ENCODE measurements at regions of chr6 and their contacts with region 1.

Region 1: GRCh38 chr6:72616406-72617015 is 5.4 kb upstream of the KCNQ5 start:
- DNase-seq: no peak
- ATAC-seq: no peak
- H3K4me3 ChIP-seq: no peak overlapping the region
- H3K27ac ChIP-seq: no peak overlapping the region
- H3K4me1 ChIP-seq: peaks cover 13% of the 10 kb centered on the region
- H3K27me3 ChIP-seq: no peaks in the 10 kb centered on the region
- CTCF ChIP-seq: peak; percentile 57 to 70 (median 60); a peak in 5 of 6 replicates
- EP300 ChIP-seq: no peak
- POLR2A ChIP-seq: no peak
- RAD21 ChIP-seq: peak; percentile 81

Region 2: DNA sequence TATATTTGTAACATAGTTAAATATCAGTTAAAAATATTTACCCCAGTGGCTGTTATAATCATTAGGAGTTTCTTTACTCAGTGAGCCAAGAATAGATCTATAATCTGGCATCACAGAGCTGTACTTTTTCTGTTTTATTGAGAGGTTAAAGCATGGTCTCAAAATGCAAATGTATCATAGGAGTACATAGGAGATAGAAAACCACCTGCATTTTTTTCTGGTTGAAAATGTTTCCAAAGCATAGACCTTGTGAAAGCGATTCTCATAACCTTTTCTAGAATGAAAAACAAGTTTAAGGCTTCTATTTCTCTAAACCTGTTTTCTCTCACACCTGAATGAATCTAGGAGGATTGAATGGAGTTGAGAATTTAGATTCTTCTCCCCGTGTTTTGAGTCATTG is 19.7 kb after region 1 on chr6:
- CTCF ChIA-PET with region 1: interaction called, 53 read pairs
- POLR2A ChIA-PET with region 1: interaction called, 5 read pairs
- RAD21 ChIA-PET with region 1: interaction called, 172 read pairs
- SMC1A ChIA-PET with region 1: interaction called, 108 read pairs
- in situ Hi-C with region 1: no loop called
- intact Hi-C with region 1: no loop called
- DNase-seq: peak; percentile 60
- ATAC-seq: peak; percentile 83
- H3K4me3 ChIP-seq: peak overlapping the region; percentile 1; the same call in 1 of the 2 replicates
- H3K27ac ChIP-seq: peak overlapping the region; percentile 21
- H3K4me1 ChIP-seq: peaks cover 14% of the 10 kb centered on the region
- H3K27me3 ChIP-seq: no peaks in the 10 kb centered on the region
- CTCF ChIP-seq: no peak
- EP300 ChIP-seq: peak in 1 of 2 experiments; percentile 43; a peak in 1 of 4 replicates
- POLR2A ChIP-seq: no peak
- RAD21 ChIP-seq: no peak

Region 3: DNA sequence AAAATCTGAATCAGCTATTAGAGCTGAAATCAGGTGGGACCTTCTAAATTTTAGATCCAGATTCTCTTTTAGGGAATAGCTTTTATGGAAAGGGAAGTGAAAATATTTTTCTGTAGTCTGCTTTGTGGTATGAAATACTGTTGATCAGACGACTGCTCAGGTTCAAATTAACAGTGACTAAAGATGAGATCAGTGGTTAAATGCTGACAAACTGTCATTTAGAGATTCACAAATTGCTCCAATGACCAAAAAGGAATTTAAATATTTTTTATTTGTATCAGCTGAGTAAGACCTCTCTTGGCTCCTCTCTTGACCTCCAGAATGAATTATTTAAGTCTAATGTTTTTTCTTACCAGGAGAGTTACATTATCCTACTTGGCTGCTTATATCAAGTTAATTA is 82.6 kb after region 1 on chr6:
- CTCF ChIA-PET with region 1: interaction called, 40 read pairs
- POLR2A ChIA-PET with region 1: no interaction called
- RAD21 ChIA-PET with region 1: interaction called, 21 read pairs
- SMC1A ChIA-PET with region 1: interaction called, 245 read pairs
- in situ Hi-C with region 1: no loop called
- intact Hi-C with region 1: no loop called
- DNase-seq: no peak
- ATAC-seq: peak; percentile 75
- H3K4me3 ChIP-seq: no peak overlapping the region
- H3K27ac ChIP-seq: no peak overlapping the region
- H3K4me1 ChIP-seq: no peaks in the 10 kb centered on the region
- H3K27me3 ChIP-seq: no peaks in the 10 kb centered on the region
- CTCF ChIP-seq: no peak
- EP300 ChIP-seq: no peak
- POLR2A ChIP-seq: no peak
- RAD21 ChIP-seq: no peak

Region 4: DNA sequence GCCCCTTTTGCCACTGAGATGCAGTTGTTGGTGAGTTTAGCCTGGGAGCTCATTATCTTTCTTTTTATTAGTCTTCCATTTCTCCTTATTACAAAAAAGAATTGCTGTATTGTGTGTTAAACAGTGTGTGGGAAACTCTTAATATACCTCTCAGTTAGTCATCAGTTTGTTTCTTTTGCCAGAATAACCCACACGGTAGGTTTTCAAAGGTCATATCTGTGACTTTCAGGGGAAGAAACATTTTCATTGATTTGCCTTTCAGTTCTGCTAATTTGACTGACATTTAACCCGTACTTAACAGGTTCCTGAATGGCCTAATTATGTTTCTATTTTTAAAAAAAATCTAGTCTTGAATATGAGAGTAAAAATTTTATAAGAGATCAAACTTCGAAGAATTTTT is 463.5 kb after region 1 on chr6:
- CTCF ChIA-PET with region 1: interaction called, 14 read pairs
- POLR2A ChIA-PET with region 1: no interaction called
- RAD21 ChIA-PET with region 1: interaction called, 13 read pairs
- SMC1A ChIA-PET with region 1: interaction called, 14 read pairs
- in situ Hi-C with region 1: no loop called
- intact Hi-C with region 1: no loop called
- DNase-seq: peak; percentile 33
- ATAC-seq: peak; percentile 89
- H3K4me3 ChIP-seq: no peak overlapping the region
- H3K27ac ChIP-seq: peak overlapping the region; percentile 55; the same call in 1 of the 2 replicates
- H3K4me1 ChIP-seq: peaks cover 3% of the 10 kb centered on the region; the same call in 1 of the 2 replicates
- H3K27me3 ChIP-seq: no peaks in the 10 kb centered on the region
- CTCF ChIP-seq: no peak
- EP300 ChIP-seq: peak; percentile 73 to 76; a peak in 2 of 4 replicates
- POLR2A ChIP-seq: no peak
- RAD21 ChIP-seq: no peak

Region 5: DNA sequence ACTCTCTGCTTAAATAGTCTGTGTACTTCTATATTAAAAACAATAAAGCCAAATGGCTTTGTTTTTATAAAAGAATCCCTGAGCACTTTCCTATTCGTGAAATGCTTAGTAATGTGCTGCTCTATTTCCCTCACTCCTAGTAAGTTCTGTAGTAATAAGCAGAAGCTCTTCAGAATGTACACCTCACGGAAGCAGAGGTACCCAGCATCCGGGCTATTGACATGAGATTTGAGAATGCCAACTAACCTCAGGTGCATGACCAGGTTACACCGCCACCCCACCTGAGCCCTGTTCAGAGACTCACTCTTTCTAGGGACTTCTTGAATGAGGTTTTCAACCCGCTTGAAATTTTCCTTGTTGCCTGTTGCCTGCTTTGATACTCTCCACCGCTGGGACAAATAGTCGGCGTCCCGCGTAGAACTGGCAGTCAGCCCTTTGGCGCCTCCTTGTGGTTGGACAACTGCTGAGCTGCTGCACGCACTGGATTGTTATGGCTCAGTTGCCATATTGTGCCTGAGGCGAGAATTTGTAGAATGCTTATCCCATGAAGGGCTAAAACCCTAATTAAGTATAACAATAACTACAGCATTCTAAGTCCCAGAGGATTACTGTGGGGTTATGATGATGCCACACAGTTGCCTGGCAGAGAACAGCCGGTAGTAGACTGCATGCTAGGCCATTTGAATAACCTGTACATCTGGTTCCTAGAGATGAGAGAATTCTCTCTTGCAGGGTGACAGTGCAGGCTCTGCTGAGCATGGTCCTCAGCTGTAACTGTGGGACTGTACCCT is 513.3 kb after region 1 on chr6:
- CTCF ChIA-PET with region 1: interaction called, 644 read pairs
- POLR2A ChIA-PET with region 1: interaction called, 10 read pairs
- RAD21 ChIA-PET with region 1: interaction called, 436 read pairs
- SMC1A ChIA-PET with region 1: interaction called, 446 read pairs
- in situ Hi-C with region 1: loop called (anchors 5 kb)
- intact Hi-C with region 1: loop called (anchors 1 kb)
- DNase-seq: peak; percentile 39
- ATAC-seq: peak; percentile 99
- H3K4me3 ChIP-seq: no peak overlapping the region
- H3K27ac ChIP-seq: no peak overlapping the region
- H3K4me1 ChIP-seq: no peaks in the 10 kb centered on the region
- H3K27me3 ChIP-seq: no peaks in the 10 kb centered on the region
- CTCF ChIP-seq: peak; percentile 95 to 99 (median 96)
- EP300 ChIP-seq: no peak
- POLR2A ChIP-seq: no peak
- RAD21 ChIP-seq: peak; percentile 99

Region 6: DNA sequence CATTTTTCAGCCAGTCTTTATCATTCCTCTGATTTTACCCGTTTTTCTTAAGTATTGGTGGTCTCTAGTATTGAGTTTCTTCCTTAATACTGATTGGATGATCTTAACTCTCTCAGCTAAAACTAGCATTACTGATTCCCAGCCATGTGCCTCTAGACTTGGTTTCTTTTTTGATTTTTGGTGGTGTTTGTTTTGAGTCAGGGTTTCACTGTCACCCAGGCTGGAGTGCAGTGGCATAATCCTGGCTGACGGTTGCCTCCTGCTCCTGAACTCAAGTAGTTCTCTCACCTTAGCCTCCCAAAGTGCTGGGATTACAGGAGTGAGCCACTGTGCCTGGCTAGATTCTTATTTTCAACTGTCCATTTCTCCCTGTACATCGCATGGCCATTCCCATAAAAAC is 712.7 kb after region 1 on chr6:
- CTCF ChIA-PET with region 1: interaction called, 27 read pairs
- POLR2A ChIA-PET with region 1: no interaction called
- RAD21 ChIA-PET with region 1: interaction called, 10 read pairs
- SMC1A ChIA-PET with region 1: interaction called, 11 read pairs
- in situ Hi-C with region 1: no loop called
- intact Hi-C with region 1: loop called (anchors 5 kb)
- DNase-seq: no peak
- ATAC-seq: peak; percentile 69
- H3K4me3 ChIP-seq: no peak overlapping the region
- H3K27ac ChIP-seq: no peak overlapping the region
- H3K4me1 ChIP-seq: peaks cover 4% of the 10 kb centered on the region; the same call in 1 of the 2 replicates
- H3K27me3 ChIP-seq: no peaks in the 10 kb centered on the region
- CTCF ChIP-seq: no peak
- EP300 ChIP-seq: no peak
- POLR2A ChIP-seq: no peak
- RAD21 ChIP-seq: no peak

Measured in GM12878 (cell line).